ENCODE measurements at regions of chr16 and their contacts with region 1.

Region 1: GRCh38 chr16:14300705-14301168 is 229.6 kb downstream of the MRTFB start:
- DNase-seq: peak; percentile 76
- H3K27ac ChIP-seq: peak overlapping the region; percentile 90
- CTCF ChIP-seq: peak; percentile 90

Region 2: GRCh38 chr16:14097182-14097959 is 203.4 kb before region 1 on chr16:
- CTCF ChIA-PET with region 1: no interaction called
- POLR2A ChIA-PET with region 1: no interaction called
- DNase-seq: peak; percentile 67
- H3K27ac ChIP-seq: no peak overlapping the region
- CTCF ChIP-seq: no peak

Region 3: GRCh38 chr16:14263011-14263410 is 37.7 kb before region 1 on chr16:
- CTCF ChIA-PET with region 1: no interaction called
- POLR2A ChIA-PET with region 1: no interaction called
- DNase-seq: no peak
- H3K27ac ChIP-seq: no peak overlapping the region
- CTCF ChIP-seq: no peak

Region 4: DNA sequence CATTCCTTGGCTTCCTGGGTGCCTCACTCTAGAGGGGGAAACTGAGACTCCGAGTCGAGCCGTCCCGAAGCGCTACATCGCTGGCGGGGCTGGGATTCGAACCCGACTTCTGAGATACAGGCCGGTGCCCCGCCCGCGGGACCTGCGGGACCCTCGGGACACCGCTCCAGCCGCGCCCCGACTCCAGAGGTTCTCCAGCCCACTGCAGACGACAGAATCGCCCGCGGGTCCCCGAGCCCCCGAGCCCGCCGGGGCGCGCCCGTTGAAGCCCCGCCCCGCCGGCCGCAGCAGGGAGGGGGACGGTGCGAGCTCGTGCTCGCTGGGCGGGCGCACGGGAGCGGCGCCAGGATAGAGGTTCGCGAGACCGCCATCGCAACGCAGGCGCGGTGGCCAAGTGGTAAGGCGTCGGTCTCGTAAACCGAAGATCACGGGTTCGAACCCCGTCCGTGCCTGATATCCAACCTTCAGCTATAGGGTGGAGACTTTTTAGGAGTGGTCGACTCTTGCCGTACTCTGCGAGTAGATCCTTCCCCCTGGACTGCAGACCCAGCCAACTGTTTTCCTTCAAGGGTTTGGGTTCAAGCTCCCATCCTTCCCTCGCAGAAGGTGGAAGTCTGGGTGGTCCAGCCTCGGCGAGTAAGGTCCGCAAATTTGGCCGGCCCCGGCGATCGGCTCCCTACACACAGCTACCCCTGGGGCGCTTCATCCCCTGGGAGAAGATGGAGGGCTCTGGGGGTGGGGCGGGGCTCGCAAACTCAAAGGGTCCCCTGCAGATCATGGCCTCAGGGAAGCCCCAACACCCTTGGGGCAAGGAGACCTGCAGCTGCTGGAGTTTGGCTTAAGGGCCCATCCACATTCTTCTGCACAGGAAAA is 15.0 kb before region 1 on chr16:
- CTCF ChIA-PET with region 1: interaction called, 14 read pairs
- POLR2A ChIA-PET with region 1: no interaction called
- DNase-seq: peak; percentile 86
- H3K27ac ChIP-seq: peak overlapping the region; percentile 79
- CTCF ChIP-seq: no peak

Region 5: DNA sequence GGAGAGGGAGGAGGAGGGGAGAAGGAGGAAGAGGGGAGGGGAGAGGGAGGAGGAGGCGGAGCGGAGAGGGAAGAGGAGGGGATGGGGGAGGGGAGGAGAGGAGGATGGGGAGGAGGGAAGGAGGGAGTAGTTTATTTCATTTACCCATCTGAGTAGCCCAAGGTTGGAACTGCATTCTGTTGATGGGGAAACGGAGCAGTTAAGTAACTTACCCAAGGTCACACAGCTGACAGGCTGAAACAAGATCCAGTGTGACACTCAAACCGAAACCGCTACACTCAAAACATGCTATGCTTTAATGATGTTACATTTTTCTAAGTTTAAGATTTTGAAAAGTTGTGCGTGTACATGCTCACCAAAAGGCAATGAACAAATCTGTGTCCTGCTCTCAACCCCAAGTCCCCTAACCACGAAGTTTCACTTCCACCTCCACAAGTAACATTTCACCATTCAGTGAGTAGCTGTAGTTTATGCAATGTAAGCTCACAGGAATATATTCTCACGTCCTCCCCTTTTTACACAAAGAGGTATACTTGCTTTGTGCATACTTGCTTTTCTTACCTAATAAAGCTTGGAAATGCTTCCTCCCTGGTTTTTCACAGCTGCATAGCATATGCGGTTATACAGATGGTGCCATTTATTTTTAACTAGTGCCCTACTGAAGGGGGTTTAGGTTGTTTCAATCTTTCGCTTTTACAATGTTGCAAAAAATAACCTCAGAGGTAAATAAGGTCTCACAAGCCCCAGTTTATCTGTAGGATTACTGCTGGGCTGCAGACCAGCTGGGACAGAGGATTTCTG is 54.0 kb after region 1 on chr16:
- CTCF ChIA-PET with region 1: no interaction called
- POLR2A ChIA-PET with region 1: no interaction called
- DNase-seq: no peak
- H3K27ac ChIP-seq: peak overlapping the region; percentile 47
- CTCF ChIP-seq: no peak

Region 6: GRCh38 chr16:14462811-14463210 is 162.1 kb after region 1 on chr16:
- CTCF ChIA-PET with region 1: no interaction called
- POLR2A ChIA-PET with region 1: no interaction called
- DNase-seq: peak; percentile 14
- H3K27ac ChIP-seq: no peak overlapping the region
- CTCF ChIP-seq: no peak